ENCODE measurements at regions of chr1 and their contacts with region 1.

Region 1: DNA sequence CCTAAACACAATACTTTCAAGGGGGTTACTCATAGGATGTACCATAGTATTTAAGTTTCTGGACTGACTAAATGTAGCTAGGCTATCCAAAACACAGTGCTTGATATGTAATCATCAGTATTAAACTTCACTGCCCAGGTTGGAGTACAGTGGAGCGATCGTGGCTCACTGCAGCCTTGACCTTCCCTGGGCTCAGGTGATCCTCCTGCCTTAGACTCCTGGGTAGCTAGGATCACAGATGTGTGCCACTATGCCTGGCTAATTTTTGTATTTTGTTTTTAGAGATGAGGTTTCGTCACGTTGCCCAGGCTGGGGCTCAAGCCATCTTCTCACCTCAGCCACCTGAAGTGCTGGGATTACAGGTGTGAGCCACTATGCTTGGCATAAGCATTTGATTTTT is 10.6 kb downstream of the NASP start:
- DNase-seq: no peak
- H3K4me3 ChIP-seq: no peak overlapping the region
- H3K27ac ChIP-seq: no peak overlapping the region
- H3K4me1 ChIP-seq: no peaks in the 10 kb centered on the region
- H3K27me3 ChIP-seq: no peaks in the 10 kb centered on the region
- CTCF ChIP-seq: no peak
- POLR2A ChIP-seq: no peak

Region 2: DNA sequence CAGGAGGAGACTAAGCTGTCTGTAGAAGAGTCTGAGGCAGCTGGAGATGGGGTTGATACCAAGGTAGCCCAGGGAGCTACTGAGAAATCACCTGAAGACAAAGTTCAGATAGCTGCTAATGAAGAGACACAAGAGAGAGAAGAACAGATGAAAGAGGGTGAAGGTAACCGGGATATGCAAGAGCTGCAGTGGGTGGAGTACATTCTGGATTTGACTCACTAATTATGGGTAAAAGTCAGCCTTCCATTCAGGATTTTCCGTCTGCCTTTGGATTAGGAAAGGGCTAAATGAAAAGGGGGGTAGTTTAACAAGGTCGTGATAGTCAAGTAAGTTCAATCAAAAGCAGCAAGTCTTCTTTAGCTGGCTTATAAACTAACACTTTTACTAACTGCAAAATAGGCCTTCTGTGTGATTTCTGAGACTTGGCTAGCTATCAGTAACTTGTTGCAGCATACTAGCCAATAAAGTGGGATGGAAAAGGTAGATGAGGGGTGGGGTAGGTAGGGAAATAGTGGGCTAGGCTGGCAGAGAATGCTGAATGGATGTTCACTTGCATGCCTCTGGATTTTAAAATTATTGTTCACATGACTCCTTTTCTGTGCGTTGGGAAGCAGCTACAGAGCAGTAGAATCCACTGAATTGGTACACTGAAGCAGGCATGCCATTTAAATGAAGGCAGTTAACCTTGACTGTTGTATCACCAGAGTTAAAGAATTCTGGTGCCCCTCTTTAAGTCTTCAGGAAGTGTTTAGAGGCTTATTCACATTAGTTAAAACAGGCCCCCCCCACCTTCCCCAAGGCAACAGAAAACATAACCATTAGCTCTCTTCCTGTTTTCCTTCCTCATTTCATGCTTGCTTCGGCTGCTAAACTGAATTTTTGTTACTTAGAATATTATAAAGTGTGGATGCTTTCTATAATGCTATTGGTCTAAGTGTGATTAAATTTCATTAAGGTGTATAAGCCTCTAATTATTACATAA is 14.1 kb after region 1 on chr1:
- CTCF ChIA-PET with region 1: interaction called, 3 read pairs
- POLR2A ChIA-PET with region 1: no interaction called
- dilution Hi-C with region 1: no loop called
- intact Hi-C with region 1: loop called (anchors 2 kb)
- DNase-seq: peak; percentile 85
- H3K4me3 ChIP-seq: no peak overlapping the region
- H3K27ac ChIP-seq: peak overlapping the region; percentile 52
- H3K4me1 ChIP-seq: peaks cover 28% of the 10 kb centered on the region
- H3K27me3 ChIP-seq: no peaks in the 10 kb centered on the region
- CTCF ChIP-seq: no peak
- POLR2A ChIP-seq: no peak